Thyroid gland (tissue), 4 donors: ENCODE measurements at regions of chr12 and their contacts with region 1.

Region 1: GRCh38 chr12:50314629-50315312 is 31.5 kb upstream of the LIMA1 start:
- DNase-seq: no peak
- H3K4me3 ChIP-seq: no peak overlapping the region
- H3K27ac ChIP-seq: no peak overlapping the region
- H3K4me1 ChIP-seq: no peaks in the 10 kb centered on the region
- H3K27me3 ChIP-seq: no peaks in the 10 kb centered on the region
- CTCF ChIP-seq: peak in 4 of 6 experiments; percentile 36 to 66 (median 51)
- POLR2A ChIP-seq: no peak

Region 2: DNA sequence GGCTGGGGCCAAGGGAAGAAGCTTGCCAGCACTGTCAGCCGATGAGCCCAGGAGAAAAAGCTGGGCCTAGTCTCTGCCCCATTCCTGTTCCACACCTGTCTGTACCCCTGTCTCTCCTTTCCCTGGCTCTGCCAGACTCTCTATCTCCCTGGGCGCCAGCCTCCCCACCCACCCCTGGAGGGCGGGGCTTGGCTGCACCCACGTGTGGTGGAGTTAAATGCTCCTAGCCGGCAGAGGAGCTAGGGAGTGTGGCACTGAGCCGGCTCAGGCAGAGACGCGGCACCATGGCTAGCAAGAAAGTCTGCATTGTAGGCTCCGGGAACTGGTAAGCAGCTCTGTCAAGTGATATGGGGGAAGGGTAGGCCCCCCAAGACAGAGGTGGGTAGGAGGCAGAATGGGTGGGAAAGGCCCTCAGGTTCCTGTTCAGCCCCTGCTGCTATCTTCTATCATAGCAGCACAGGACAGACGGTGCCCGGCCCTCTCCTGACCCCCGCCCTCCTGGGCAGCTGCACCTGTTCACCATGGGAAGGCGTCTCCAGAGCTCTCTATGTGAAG is 210.9 kb before region 1 on chr12 and contains the start of gene GPD1:
- intact Hi-C with region 1: loop called (anchors 10 kb)
- DNase-seq: peak; percentile 90 to 92
- H3K4me3 ChIP-seq: no peak within 1 kb of the TSS
- H3K27ac ChIP-seq: peak within 1 kb of the TSS in 1 of 3 donors; percentile 39
- H3K4me1 ChIP-seq: peaks cover 10 to 13% of the 10 kb centered on the region in 2 donors
- H3K27me3 ChIP-seq: no peaks in the 10 kb centered on the region
- CTCF ChIP-seq: peak in 2 of 6 experiments; percentile 12 to 25
- POLR2A ChIP-seq: peak in 1 of 2 donors; percentile 73
- total RNA-seq, gene GPD1: 5.1 to 10.6 (median 7.1) TPM

Region 3: DNA sequence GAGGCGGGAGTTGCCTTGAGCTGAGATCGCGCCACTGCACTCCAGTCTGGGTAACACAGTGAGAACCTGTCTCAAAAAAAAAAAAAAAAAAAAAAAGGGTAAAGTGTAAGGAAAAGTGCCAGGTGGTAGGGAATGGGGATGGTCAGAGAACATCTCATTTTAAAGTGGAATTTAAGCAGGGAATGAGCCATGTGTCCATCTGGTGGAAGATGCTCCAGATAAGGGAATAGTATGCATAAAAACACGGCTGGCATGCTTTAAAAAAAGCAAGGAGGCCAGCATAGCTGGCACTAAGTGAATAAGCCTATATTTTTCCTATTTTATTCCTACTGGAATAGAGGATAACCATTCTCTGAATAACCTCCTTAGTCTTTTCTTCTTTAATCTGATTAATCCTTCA is 47.9 kb after region 1 on chr12:
- intact Hi-C with region 1: no loop called
- DNase-seq: no peak
- H3K4me3 ChIP-seq: no peak overlapping the region
- H3K27ac ChIP-seq: no peak overlapping the region
- H3K4me1 ChIP-seq: no peaks in the 10 kb centered on the region
- H3K27me3 ChIP-seq: no peaks in the 10 kb centered on the region
- CTCF ChIP-seq: no peak
- POLR2A ChIP-seq: no peak